Activated CD8-positive, alpha-beta T cell treated with anti-CD3 and anti-CD28 coated beads, Interleukin-2, amount 10 ng/mL, durations not matched to agents 7 days and 5 days (primary cell): ENCODE measurements at regions of chr17 and their contacts with region 1.

Region 1: DNA sequence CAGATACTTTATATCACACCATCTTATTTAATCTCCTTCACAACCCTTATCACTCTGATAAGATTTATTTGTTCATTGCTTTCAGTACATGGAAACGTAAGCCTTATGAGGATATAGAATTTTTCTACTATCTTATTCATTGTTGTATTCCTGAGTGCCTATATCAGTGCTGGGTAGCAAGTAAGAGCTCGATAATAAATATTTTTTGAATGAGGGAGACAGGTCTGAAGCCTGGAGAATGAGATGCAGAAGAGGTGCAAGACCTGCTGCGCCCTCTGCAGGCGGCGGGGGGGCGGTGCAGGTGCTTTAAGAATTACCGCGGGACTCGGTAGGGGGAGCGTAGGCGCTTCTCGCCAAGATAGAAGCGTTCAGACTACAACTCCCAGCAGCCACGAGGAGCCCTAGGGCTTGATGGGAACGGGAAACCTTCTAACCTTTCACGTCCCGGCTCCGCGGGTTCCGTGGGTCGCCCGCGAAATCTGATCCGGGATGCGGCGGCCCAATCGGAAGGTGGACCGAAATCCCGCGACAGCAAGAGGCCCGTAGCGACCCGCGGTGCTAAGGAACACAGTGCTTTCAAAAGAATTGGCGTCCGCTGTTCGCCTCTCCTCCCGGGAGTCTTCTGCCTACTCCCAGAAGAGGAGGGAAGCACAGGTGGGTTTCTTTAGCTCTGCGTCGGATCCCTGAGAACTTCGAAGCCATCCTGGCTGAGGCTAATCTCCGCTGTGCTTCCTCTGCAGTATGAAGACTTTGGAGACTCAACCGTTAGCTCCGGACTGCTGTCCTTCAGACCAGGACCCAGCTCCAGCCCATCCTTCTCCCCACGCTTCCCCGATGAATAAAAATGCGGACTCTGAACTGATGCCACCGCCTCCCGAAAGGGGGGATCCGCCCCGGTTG is at the start of gene WRAP53:
- DNase-seq: peak; percentile 97
- ATAC-seq: peak; percentile 85
- H3K4me3 Mint-ChIP-seq: peak within 1 kb of the TSS; percentile 98
- H3K27ac Mint-ChIP-seq: peak within 1 kb of the TSS; percentile 100
- H3K4me1 Mint-ChIP-seq: peaks cover 40% of the 10 kb centered on the region
- H3K27me3 Mint-ChIP-seq: no peaks in the 10 kb centered on the region
- total RNA-seq, gene WRAP53: 27.1 to 29.3 TPM

Region 2: DNA sequence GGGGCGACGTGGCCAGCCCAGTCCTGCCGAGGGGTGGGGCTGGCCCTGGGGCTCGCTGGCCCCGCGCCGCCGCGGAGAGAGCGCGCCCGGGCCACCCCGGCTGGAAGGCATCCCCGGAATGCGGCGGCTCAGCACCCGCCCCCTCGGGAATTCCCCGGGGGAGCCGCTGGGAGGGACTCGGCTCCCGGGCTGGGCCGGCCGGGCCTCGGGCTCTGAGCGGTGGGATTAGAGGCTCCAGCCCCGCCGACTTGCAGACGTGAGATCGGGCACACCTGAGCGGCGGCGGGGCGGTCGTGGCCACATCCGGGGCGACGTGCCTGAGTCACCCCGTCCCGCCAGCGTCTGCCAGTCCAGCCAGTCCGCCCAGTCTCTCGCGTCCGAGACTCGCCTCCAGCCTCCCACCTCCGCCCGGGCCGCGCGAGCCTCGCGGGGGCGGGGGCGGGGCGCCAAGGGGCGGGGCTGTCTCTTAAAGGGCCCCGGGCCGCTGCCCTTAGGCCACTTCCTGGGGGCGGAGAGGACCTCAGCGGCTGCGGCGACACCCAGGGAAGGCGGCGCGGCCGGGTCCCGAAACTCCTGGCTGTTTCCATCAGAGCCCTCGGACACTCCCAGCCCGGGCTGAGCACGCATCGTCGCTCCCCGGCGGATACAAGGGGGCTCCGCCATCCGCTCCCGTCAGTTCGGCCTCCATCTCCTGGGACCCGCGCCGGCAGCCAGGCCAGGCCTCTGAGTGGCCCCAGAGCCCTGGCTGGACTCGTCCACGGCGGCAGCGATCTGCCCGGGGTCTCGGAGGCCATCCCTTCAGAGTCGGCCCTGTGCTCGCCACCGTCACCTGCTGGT is 336.3 kb before region 1 on chr17 and contains the start of gene KCTD11:
- CTCF ChIA-PET with region 1: interaction called, 22 read pairs
- POLR2A ChIA-PET with region 1: interaction called, 8 read pairs
- DNase-seq: peak; percentile 87
- ATAC-seq: peak; percentile 63
- H3K4me3 Mint-ChIP-seq: peak within 1 kb of the TSS; percentile 76
- H3K27ac Mint-ChIP-seq: peak within 1 kb of the TSS; percentile 81
- H3K4me1 Mint-ChIP-seq: peaks cover 80% of the 10 kb centered on the region
- H3K27me3 Mint-ChIP-seq: no peaks in the 10 kb centered on the region
- total RNA-seq, gene KCTD11: 11.4 to 11.8 TPM

Region 3: DNA sequence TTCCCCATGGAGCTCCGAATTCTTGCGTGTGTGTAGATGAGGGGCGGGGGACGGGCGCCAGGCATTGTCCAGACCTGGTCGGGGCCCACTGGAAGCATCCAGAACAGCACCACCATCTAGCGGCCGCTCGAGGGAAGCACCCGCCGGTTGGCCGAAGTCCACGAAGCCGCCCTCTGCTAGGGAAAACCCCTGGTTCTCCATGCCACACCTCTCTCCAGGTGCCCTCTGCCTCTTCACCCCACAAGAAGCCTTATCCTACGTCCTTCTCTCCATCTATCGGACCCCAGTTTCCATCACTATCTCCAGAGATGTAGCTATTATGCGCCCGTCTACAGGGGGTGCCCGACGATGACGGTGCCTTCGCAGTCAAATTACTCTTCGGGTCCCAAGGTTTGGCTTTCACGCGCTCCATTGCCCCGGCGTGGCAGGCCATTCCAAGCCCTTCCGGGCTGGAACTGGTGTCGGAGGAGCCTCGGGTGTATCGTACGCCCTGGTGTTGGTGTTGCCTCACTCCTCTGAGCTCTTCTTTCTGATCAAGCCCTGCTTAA is 127.1 kb before region 1 on chr17:
- CTCF ChIA-PET with region 1: interaction called, 37 read pairs
- POLR2A ChIA-PET with region 1: interaction called, 11 read pairs
- DNase-seq: peak; percentile 91
- ATAC-seq: peak; percentile 74
- H3K4me3 Mint-ChIP-seq: peak overlapping the region; percentile 77
- H3K27ac Mint-ChIP-seq: peak overlapping the region; percentile 87
- H3K4me1 Mint-ChIP-seq: peaks cover 63% of the 10 kb centered on the region
- H3K27me3 Mint-ChIP-seq: no peaks in the 10 kb centered on the region

Region 4: GRCh38 chr17:7627250-7628121 is 60.7 kb before region 1 on chr17 and contains the start of gene SAT2:
- CTCF ChIA-PET with region 1: interaction called, 129 read pairs
- POLR2A ChIA-PET with region 1: interaction called, 101 read pairs
- DNase-seq: peak; percentile 91
- ATAC-seq: peak; percentile 95
- H3K4me3 Mint-ChIP-seq: peak within 1 kb of the TSS; percentile 89
- H3K27ac Mint-ChIP-seq: peak within 1 kb of the TSS; percentile 75
- H3K4me1 Mint-ChIP-seq: peaks cover 14% of the 10 kb centered on the region
- H3K27me3 Mint-ChIP-seq: no peaks in the 10 kb centered on the region
- total RNA-seq, gene SAT2: 18.2 to 21.4 TPM

Region 5: DNA sequence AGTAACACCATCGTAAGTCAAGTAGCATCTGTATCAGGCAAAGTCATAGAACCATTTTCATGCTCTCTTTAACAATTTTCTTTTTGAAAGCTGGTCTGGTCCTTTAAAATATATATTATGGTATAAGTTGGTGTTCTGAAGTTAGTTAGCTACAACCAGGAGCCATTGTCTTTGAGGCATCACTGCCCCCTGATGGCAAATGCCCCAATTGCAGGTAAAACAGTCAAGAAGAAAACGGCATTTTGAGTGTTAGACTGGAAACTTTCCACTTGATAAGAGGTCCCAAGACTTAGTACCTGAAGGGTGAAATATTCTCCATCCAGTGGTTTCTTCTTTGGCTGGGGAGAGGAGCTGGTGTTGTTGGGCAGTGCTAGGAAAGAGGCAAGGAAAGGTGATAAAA is 14.9 kb before region 1 on chr17:
- CTCF ChIA-PET with region 1: interaction called, 43 read pairs
- POLR2A ChIA-PET with region 1: interaction called, 21 read pairs
- DNase-seq: peak; percentile 59
- ATAC-seq: no peak
- H3K4me3 Mint-ChIP-seq: no peak overlapping the region
- H3K27ac Mint-ChIP-seq: no peak overlapping the region
- H3K4me1 Mint-ChIP-seq: no peaks in the 10 kb centered on the region
- H3K27me3 Mint-ChIP-seq: no peaks in the 10 kb centered on the region

Region 6: DNA sequence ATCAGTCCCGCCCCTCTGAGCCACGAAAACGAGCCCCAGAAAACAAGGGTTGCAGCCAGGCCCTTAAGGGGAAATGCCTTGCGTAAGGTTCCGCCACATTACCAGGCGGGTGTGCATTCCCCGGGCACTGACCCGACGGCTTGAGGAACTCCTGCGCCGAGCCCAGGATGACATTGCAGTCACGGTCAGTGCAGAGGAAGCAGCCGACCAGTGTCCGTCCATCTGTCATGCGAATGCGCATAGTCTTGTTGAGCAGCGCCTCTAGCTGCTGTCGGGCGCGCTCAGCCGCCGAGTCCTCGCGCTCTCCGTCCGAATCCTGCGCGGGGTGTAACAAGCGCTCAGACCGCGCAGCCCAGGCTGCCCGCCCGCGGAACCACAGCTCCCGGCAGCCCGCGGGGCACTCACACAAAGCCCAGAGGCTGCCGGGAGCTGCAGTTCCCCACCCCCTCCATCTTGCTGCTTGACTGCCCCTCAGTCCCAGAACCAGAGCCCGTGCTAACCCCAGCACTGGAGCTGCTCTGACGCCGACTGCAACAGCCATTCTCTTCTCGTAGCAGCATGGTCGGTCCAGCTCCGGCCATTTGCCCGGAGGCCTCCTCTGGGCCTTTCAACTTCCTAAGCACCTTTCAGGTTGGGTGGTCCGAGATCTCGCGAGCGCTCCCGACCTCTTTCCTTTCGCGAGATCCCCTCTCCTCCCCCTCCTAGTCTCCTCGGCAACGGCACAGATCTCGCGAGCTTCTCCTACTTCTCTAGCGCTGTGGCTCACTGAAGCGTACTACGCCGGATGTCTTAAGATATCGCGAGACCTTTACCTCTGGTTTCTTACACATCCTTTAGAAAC is 168.9 kb after region 1 on chr17 and contains the start of gene NAA38:
- CTCF ChIA-PET with region 1: no interaction called
- POLR2A ChIA-PET with region 1: interaction called, 11 read pairs
- DNase-seq: peak; percentile 98
- ATAC-seq: peak; percentile 89
- H3K4me3 Mint-ChIP-seq: no peak within 1 kb of the TSS
- H3K27ac Mint-ChIP-seq: no peak within 1 kb of the TSS
- H3K4me1 Mint-ChIP-seq: peaks cover 3% of the 10 kb centered on the region
- H3K27me3 Mint-ChIP-seq: no peaks in the 10 kb centered on the region
- total RNA-seq, gene NAA38: 92.7 to 93.1 TPM